Activated CD8-positive, alpha-beta T cell treated with anti-CD3 and anti-CD28 coated beads, Interleukin-2, amount 10 ng/mL, durations not matched to agents 7 days and 5 days (primary cell): ENCODE measurements at regions of chr13 and their contacts with region 1.

Region 1: DNA sequence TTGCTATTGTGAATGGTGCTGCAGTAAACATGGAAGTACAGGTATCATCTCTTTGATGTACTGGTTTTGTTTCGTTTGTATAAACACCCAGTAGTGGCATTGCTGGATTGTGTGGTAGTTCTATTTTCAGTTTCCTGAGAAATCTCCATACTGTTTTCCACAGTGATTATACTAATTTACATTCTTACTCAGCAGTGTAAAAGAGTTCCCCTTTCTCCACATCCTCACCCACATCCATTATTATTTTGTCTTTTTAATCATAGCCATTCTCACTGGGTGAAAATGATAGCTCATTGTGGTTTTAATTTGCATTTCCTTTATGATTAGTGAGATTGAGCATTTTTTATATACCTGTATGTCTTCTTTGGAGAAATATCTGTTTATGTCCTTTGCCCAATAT is 62.3 kb upstream of the PARP4 start:
- DNase-seq: no peak
- ATAC-seq: no peak
- H3K4me3 Mint-ChIP-seq: no peak overlapping the region
- H3K27ac Mint-ChIP-seq: no peak overlapping the region
- H3K4me1 Mint-ChIP-seq: peaks cover 6% of the 10 kb centered on the region
- H3K27me3 Mint-ChIP-seq: peaks cover 3% of the 10 kb centered on the region

Region 2: DNA sequence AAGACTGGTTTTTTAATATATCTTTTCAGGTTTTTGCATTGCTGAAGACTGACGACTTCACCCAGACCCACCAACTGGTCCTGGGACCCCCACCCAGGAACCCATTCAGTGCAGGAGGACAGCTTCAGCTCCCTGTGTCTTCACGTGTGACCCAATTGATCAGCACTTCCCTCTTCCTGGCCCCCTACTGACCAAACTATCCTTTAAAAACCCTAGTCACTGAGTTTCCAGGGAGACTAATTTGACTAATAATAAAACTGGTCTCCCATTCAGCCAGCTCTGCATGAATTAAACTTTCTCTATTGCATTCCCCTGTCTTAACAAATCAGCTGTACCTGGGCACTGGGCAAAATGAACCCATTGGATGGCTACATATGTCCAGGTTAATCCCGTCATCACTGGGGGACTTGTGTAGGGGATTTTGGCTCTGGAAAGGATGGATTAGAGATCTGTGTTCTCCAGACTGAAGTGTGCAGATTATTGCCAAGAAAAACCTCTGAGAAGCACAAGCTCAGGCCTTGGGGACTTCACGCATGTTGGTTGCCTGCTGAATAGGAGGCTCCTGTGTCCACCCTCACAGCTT is 45.9 kb before region 1 on chr13:
- CTCF ChIA-PET with region 1: no interaction called
- POLR2A ChIA-PET with region 1: no interaction called
- DNase-seq: no peak
- ATAC-seq: no peak
- H3K4me3 Mint-ChIP-seq: no peak overlapping the region
- H3K27ac Mint-ChIP-seq: no peak overlapping the region
- H3K4me1 Mint-ChIP-seq: no peaks in the 10 kb centered on the region
- H3K27me3 Mint-ChIP-seq: peaks cover 44% of the 10 kb centered on the region

Region 3: DNA sequence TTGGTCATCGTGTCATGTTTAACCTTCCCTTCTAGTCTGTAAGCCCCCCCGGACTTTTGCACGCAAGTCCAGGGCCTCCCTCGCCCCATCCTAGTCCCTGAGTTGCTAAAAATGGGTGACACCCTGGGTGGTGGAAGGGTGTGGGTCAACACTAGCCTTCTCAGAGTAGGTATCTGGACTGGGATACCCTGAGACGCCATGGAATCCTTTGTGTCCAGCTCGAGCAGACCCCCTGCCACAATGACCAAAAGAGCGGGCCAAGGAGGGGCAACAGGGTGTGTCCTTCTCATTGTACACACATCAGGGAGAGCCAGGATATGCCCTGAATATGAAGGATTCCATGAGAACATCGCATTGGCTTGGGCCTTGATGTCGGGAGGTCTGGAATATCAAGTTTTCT is 37.9 kb after region 1 on chr13:
- CTCF ChIA-PET with region 1: no interaction called
- POLR2A ChIA-PET with region 1: no interaction called
- DNase-seq: no peak
- ATAC-seq: no peak
- H3K4me3 Mint-ChIP-seq: no peak overlapping the region
- H3K27ac Mint-ChIP-seq: no peak overlapping the region
- H3K4me1 Mint-ChIP-seq: peaks cover 39% of the 10 kb centered on the region
- H3K27me3 Mint-ChIP-seq: no peaks in the 10 kb centered on the region

Region 4: DNA sequence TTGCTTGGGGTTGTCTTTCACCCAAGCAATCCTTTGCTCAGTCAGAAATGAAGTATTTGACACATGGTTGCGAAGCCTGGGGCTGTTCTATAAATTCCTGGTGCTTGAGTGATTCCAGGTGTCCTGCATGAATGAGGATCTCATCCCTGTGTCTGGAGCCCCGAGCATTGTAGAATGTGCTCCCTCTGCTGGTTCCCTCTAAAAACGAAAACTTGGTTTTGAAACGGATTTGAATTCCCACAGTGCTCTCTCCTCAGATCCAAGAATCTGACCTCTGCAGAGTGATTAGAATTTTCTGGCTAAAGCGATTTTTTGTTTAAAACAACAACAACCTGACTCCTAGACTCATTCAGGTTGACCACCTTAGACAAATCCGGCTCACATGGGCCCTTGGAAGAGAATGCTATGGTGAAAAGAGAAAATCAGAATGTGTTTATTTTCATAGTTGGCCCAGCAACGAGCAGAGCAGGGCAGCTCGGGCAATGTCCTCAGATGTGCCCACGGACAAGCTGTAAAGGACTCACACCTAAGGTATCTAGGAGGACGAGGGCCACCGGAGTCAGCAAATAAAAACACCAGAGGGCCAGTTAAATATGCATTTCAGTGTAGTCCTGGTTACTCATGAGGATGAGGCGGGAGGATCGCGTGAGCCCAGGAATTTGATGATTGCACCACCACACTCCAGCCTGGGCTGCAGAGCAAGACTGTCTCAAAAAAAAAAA is 96.7 kb after region 1 on chr13:
- CTCF ChIA-PET with region 1: interaction called, 14 read pairs
- POLR2A ChIA-PET with region 1: no interaction called
- DNase-seq: peak; percentile 36
- ATAC-seq: peak; percentile 44
- H3K4me3 Mint-ChIP-seq: no peak overlapping the region
- H3K27ac Mint-ChIP-seq: no peak overlapping the region
- H3K4me1 Mint-ChIP-seq: peaks cover 11% of the 10 kb centered on the region
- H3K27me3 Mint-ChIP-seq: peaks cover 25% of the 10 kb centered on the region

Region 5: DNA sequence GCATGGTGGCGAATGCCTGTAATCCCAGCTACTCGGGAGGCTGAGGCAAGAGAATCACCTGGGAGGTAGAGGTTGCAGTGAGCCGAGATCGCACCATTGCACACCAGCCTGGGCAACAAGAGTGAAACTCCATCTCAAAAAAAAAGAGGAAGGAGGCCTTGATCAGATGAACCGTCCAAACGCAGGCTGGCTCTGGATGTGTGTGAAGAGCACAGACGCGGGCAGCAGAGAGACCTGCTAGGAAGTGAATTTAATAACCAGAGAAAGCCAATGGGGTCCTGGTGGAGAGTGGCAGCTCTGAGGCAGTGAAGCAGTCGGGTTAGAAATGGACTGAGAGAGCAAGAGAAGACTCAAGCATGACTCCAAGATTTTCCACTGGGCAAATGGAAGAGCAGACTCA is 325.7 kb after region 1 on chr13:
- CTCF ChIA-PET with region 1: no interaction called
- POLR2A ChIA-PET with region 1: no interaction called
- DNase-seq: no peak
- ATAC-seq: no peak
- H3K4me3 Mint-ChIP-seq: no peak overlapping the region
- H3K27ac Mint-ChIP-seq: no peak overlapping the region
- H3K4me1 Mint-ChIP-seq: no peaks in the 10 kb centered on the region
- H3K27me3 Mint-ChIP-seq: no peaks in the 10 kb centered on the region